Tibial artery (tissue), 4 donors: ENCODE measurements at regions of chr16 and their contacts with region 1.

Region 1: DNA sequence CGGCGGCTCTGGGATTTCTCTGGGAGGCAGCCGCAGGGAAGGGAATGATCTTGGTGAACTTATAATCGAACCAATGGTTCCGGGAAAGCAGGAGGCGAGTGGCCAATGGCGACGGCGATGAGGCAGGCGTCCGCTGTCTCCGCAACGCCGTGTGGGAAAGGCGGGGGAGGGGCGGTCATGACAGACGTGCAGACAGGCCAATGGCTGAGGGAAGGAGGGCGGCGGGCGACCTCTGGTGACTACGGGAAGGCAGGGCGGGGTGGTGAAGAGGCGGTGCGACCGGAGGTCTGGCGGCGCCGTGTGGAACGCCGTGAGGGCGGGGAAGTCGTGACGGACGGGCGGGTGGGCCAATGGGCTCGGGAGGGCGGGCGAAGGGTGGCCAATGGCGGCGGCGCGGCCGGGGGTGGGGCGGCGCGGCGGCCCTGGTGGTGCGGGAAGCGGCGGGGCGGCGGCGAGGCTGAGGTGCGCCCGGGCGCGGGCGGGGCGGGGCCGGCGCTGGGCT is at the start of gene RAB40C:
- DNase-seq: peak; percentile 98 to 99
- H3K4me3 ChIP-seq: peak within 1 kb of the TSS; percentile 73 to 82
- H3K27ac ChIP-seq: peak within 1 kb of the TSS; percentile 87 to 96
- H3K4me1 ChIP-seq: peaks cover 0 to 66% (median 41%) of the 10 kb centered on the region in 4 donors
- H3K27me3 ChIP-seq: peaks cover 0 to 5% of the 10 kb centered on the region in 2 donors
- CTCF ChIP-seq: no peak

Region 2: GRCh38 chr16:636206-637080 is 46.7 kb after region 1 on chr16 and contains the start of gene METTL26:
- intact Hi-C with region 1: loop called (anchors 10 kb)
- DNase-seq: peak; percentile 97 to 98
- H3K4me3 ChIP-seq: peak within 1 kb of the TSS; percentile 66 to 91
- H3K27ac ChIP-seq: peak within 1 kb of the TSS; percentile 97
- H3K4me1 ChIP-seq: peaks cover 3 to 34% (median 27%) of the 10 kb centered on the region in 4 donors
- H3K27me3 ChIP-seq: peaks cover 0 to 4% of the 10 kb centered on the region in 2 donors
- CTCF ChIP-seq: peak in 1 of 2 experiments; percentile 13